Gastrocnemius medialis (tissue), 4 donors: ENCODE measurements at regions of chr9 and their contacts with region 1.

Region 1: GRCh38 chr9:113275157-113276131 is at the starts of genes CDC26 and PRPF4:
- DNase-seq: peak; percentile 93 to 95
- ATAC-seq: peak; percentile 97 to 98
- H3K4me3 ChIP-seq: peak within 1 kb of the TSS; percentile 63 to 89 (median 82)
- H3K27ac ChIP-seq: peak within 1 kb of the TSS; percentile 84 to 94 (median 93)
- H3K4me1 ChIP-seq: peaks cover 12 to 22% of the 10 kb centered on the region in 2 donors
- H3K27me3 ChIP-seq: no peaks in the 10 kb centered on the region
- CTCF ChIP-seq: no peak
- POLR2A ChIP-seq: peak; percentile 84 to 88
- total RNA-seq, gene CDC26: 16.7 to 34.0 (median 28.3) TPM
- total RNA-seq, gene PRPF4: 14.0 to 19.6 (median 16.4) TPM

Region 2: DNA sequence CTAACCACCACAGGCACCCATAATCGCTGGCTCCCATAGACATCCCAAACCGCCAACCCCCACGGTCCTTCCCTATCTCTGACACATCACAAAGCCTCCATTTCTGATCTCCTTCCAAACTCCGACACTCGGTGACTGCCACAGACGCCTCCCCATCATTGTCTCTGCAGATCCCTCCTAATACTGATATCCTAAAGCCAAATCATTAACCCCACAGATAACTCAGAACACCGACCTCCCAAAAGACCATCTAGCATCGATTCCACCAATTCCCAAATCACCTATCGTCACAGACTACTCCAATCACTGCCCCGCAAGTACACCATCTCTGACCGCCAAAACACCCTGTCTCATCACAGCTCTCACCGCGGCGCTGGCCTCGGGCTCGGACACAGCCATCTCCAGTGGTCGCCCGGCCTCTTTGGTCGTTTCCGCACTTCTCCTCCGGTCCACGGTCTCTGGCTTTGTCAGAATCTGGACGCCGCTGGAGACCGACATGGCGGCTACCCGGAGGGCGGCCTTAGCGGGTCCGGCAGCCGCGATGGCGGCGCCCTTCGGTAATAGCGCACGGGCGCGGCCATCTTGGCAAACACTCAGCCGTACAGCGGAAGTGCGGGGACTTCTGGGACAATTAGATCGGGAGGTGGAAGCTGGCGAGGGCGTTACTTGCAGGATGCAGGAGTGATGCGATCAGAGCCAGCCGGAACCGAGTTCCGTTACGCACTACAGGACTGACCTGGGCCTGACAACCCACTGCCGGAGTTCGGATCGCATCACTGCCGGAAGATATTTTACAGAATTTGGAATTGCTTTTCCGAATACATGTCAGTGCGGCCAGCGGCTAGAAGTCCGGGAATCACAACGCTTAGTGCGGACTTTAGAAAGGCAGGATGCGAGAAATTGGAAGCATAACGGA is 219.0 kb before region 1 on chr9 and contains the start of gene ZFP37:
- in situ Hi-C with region 1: no loop called
- intact Hi-C with region 1: loop called (anchors 10 kb)
- DNase-seq: peak; percentile 84 to 86
- ATAC-seq: peak; percentile 97 to 99
- H3K4me3 ChIP-seq: peak within 1 kb of the TSS; percentile 84 to 89 (median 86)
- H3K27ac ChIP-seq: peak within 1 kb of the TSS; percentile 68 to 76 (median 73)
- H3K4me1 ChIP-seq: peaks cover 5 to 9% of the 10 kb centered on the region in 2 donors
- H3K27me3 ChIP-seq: peaks cover 5 to 32% (median 17%) of the 10 kb centered on the region in 3 donors
- CTCF ChIP-seq: no peak
- POLR2A ChIP-seq: peak; percentile 15 to 16
- total RNA-seq, gene ZFP37: 0.49 to 2.6 (median 1.7) TPM

Region 3: DNA sequence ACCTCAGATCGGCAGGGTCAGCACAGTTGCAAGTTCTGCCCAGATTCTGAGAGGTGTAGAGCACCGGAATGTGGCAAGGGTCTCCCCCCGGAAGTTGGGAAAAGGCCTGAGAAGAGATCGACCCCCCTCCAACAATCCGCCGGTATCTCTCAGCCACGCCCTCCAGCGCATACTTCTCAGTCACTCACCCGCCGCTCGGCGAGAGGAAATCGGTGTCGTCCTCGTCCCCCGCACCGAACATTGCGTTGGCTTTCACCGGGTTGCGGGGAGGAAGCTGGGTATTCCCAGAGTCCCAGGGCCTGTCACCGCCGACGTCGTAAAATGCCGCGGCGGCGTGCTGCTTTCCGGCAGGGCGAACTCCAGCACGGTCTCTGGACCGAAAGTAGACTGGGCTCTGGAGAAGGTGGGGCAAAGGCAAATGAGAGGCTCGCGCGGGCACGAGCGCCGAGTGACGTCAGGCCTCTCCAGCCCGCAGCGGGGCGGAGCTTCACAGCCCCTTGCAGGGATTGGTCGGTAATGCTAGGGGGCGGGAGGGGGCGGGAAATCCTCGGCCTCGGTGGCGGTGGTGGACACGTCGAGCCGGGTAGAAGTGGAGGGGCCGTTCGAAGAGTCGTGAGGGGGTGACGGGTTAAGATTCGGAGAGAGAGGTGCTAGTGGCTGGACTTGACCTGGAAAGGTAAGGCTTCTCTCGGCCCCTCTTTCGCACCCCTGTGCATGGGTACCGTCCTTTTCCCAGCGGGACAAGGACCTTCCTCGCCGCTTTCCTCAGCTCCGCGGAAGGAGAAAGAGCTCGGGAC is 54.2 kb before region 1 on chr9 and contains the starts of genes FKBP15 and SLC31A1:
- in situ Hi-C with region 1: loop called in 1 of 4 experiments (anchors 10 kb)
- intact Hi-C with region 1: loop called (anchors 1 kb)
- DNase-seq: peak; percentile 96 to 98
- ATAC-seq: peak; percentile 99
- H3K4me3 ChIP-seq: peak within 1 kb of the TSS; percentile 80 to 97 (median 88)
- H3K27ac ChIP-seq: peak within 1 kb of the TSS; percentile 92 to 97 (median 94)
- H3K4me1 ChIP-seq: peaks cover 32 to 36% of the 10 kb centered on the region in 2 donors
- H3K27me3 ChIP-seq: no peaks in the 10 kb centered on the region
- CTCF ChIP-seq: no peak
- POLR2A ChIP-seq: peak; percentile 75 to 81
- total RNA-seq, gene FKBP15: 13.3 to 17.5 (median 14.5) TPM
- total RNA-seq, gene SLC31A1: 2.9 to 5.6 (median 4.3) TPM

Region 4: GRCh38 chr9:113401027-113401792 is 125.8 kb after region 1 on chr9 and contains the start of gene ALAD:
- in situ Hi-C with region 1: loop called in 3 of 4 experiments (anchors 5 to 10 kb)
- intact Hi-C with region 1: loop called (anchors 1 kb)
- DNase-seq: peak; percentile 96 to 99
- ATAC-seq: peak; percentile 95 to 98
- H3K4me3 ChIP-seq: peak within 1 kb of the TSS; percentile 86 to 98 (median 90)
- H3K27ac ChIP-seq: peak within 1 kb of the TSS; percentile 70 to 86 (median 80)
- H3K4me1 ChIP-seq: peaks cover 20 to 26% of the 10 kb centered on the region in 2 donors
- H3K27me3 ChIP-seq: no peaks in the 10 kb centered on the region
- CTCF ChIP-seq: peak; percentile 92 to 97 (median 94)
- POLR2A ChIP-seq: peak; percentile 27 to 38
- total RNA-seq, gene ALAD: 8.9 to 16.2 (median 12.3) TPM

Region 5: DNA sequence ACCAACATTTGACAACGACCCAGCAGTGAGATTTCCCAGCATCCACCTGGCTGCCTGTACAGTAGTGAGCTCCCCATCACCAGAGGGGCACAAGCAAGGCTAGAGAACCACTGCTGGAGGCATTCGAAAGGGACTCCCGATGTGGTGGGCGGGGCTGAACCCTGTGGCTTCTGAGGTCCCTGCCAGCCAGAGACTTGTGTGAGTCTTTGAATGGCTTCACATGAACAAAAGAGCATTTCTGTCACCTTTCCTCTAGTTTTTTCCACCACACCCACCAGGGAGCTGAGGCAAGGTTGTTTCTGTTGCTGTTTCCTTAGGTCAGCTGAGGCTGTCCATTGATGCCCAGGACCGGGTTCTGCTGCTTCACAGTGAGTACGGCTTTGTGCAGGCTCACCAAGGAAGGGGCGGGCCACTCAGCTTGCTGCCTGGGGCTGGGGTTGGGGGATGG is 203.8 kb after region 1 on chr9:
- in situ Hi-C with region 1: no loop called
- intact Hi-C with region 1: no loop called
- DNase-seq: peak in 1 of 2 donors; percentile 4
- ATAC-seq: no peak
- H3K4me3 ChIP-seq: no peak overlapping the region
- H3K27ac ChIP-seq: no peak overlapping the region
- H3K4me1 ChIP-seq: peaks cover 24 to 34% of the 10 kb centered on the region in 2 donors
- H3K27me3 ChIP-seq: no peaks in the 10 kb centered on the region
- CTCF ChIP-seq: no peak
- POLR2A ChIP-seq: no peak

Region 6: DNA sequence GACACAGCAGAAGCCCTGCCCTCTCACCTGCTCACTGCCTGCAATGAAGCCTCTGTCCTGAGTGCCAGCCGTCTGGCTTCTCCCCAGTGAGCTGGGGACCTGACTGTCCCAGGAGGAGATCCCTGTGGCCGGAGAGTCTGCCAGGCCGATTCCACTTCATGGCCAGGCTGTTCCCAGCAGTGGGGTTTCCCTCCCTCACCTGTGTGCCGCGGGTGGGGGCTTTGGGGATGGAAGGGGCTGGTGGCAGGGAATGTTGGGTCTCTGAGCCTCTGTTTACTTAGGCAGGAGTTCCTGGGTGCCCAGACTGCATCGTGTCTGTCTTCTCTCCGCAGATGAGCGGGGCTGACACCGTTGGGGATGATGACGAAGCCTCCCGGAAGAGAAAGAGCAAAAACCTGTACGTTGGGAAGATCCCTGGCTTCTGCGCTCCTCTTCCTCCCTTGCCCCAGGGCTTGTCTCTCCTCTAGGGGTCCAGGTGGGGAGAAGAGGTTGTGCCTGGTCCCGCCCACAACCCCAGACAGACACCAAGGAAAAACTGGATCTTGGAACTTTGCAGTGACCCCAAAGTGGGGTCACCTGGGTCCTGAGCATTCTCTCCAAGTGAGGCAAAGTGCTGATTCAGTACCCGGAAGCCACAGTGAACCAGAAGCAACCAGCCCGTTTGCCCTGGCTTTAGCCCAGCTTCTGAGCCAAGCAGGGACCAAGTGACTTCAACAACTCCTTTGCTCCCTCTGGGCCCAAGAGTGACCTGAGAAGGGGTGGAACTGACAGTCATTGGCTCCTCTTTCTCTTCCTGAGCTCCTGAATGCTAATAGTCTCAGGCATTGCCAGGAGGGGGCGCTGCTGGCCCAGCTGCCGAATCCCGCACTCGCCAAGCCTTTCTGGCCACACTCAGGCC is 315.8 kb after region 1 on chr9:
- in situ Hi-C with region 1: no loop called
- intact Hi-C with region 1: loop called (anchors 5 kb)
- DNase-seq: peak; percentile 61 to 80
- ATAC-seq: peak; percentile 77
- H3K4me3 ChIP-seq: no peak overlapping the region
- H3K27ac ChIP-seq: peak overlapping the region; percentile 49 to 77 (median 69)
- H3K4me1 ChIP-seq: peaks cover 28 to 59% of the 10 kb centered on the region in 2 donors
- H3K27me3 ChIP-seq: no peaks in the 10 kb centered on the region
- CTCF ChIP-seq: peak; percentile 91 to 96 (median 93)
- POLR2A ChIP-seq: no peak